Endothelial cell of umbilical vein (primary cell): ENCODE measurements at regions of chr17 and their contacts with region 1.

Region 1: DNA sequence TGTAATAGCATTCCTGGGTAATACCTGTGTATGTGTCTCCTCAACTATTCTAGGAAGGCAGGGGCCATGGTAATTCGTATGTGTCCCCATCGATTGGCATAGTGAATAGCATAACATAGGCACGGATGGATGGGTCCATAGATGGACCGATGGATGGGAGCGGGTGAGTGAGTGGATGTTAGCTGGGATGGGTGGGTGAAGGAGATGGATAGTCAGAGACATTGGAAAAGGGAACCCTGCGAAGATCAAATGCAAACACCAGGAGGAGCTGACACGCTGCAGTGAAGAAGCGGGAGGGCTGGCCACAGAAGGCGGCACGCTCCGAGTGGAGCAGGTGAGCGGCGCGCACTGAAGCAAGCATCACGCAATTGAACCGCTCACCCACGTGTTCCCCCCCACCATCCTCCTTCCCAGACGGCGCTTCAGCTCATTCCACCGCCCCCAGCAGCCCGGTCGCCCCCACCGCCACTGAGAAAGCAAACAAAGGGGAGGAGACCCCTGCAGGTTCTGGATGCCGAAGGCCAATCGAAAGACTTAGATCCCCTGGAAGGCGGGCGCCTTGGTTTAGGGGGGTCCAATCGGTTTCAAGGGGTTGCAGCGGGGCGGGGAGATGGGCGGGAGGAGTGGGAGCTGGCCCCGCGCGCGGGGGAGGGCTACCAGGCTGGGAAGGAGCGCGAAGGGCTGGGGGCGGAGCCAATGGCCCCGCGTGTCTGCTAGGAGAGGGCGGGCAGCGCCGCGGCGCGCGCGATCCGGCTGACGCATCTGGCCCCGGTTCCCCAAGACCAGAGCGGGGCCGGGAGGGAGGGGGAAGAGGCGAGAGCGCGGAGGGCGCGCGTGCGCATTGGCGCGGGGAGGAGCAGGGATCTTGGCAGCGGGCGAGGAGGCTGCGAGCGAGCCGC is at the start of gene ARRB2:
- DNase-seq: peak; percentile 99
- H3K4me3 ChIP-seq: peak within 1 kb of the TSS; percentile 58 to 84 (median 67)
- H3K27ac ChIP-seq: peak within 1 kb of the TSS; percentile 7
- H3K4me1 ChIP-seq: peaks cover 18% of the 10 kb centered on the region
- H3K27me3 ChIP-seq: no peaks in the 10 kb centered on the region
- CTCF ChIP-seq: peak; percentile 36 to 77
- POLR2A ChIP-seq: no peak
- total RNA-seq, gene ARRB2: 21.3 and 25.2 TPM in 2 replicates

Region 2: GRCh38 chr17:4691686-4692085 is 18.4 kb before region 1 on chr17:
- CTCF ChIA-PET with region 1: no interaction called
- POLR2A ChIA-PET with region 1: no interaction called
- dilution Hi-C with region 1: no loop called
- intact Hi-C with region 1: no loop called
- DNase-seq: no peak
- H3K4me3 ChIP-seq: no peak overlapping the region
- H3K27ac ChIP-seq: no peak overlapping the region
- H3K4me1 ChIP-seq: no peaks in the 10 kb centered on the region
- H3K27me3 ChIP-seq: no peaks in the 10 kb centered on the region
- CTCF ChIP-seq: no peak
- POLR2A ChIP-seq: no peak

Region 3: GRCh38 chr17:4733073-4733531 is 23.1 kb after region 1 on chr17:
- CTCF ChIA-PET with region 1: interaction called, 9 read pairs
- POLR2A ChIA-PET with region 1: interaction called, 9 read pairs
- dilution Hi-C with region 1: no loop called
- intact Hi-C with region 1: loop called (anchors 1 kb)
- DNase-seq: no peak
- H3K4me3 ChIP-seq: no peak overlapping the region
- H3K27ac ChIP-seq: no peak overlapping the region
- H3K4me1 ChIP-seq: peaks cover 8% of the 10 kb centered on the region
- H3K27me3 ChIP-seq: peaks cover under 1 to 1% of the 10 kb centered on the region in 2 experiments
- CTCF ChIP-seq: no peak
- POLR2A ChIP-seq: no peak

Region 4: DNA sequence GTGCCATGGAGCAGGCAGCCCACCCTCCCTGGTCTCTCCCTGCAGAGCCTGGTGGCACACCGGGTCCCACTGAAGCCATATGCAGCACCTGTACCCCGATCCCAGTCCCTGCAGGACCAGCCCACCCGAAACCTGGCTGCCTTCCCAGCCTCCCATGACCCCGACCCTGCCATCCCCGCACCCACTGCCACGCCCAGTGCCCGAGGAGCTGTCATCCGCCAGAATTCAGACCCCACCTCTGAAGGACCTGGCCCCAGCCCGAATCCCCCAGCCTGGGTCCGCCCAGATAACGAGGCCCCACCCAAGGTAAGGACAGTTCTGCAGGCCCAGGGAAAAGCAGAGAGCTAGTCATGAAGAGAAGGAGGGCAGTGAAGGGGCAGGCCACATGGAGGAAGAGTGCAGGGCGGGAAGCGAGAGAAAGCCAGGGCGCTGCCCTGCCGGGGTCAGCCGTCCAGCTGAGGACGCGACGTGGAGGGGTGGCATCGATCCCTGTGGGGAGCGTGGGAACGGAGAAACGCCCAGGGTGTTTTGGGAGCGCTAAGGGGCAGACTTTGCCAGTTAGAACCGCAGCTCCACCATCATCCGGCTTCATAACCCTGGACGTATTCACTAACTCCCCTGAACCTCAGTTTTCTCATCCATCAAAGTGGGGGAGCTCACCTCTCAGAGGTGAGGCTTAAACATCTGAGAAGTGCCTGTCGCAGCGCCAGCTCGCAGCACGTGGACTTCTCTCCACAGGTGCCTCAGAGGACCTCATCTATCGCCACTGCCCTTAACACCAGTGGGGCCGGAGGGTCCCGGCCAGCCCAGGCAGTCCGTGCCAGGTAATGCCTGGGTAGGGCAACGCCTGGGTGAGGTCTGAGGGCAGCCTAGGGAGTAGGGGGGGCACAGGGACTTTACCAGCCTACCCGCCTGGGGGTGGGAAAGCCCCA is 181.6 kb after region 1 on chr17:
- CTCF ChIA-PET with region 1: interaction called, 11 read pairs
- POLR2A ChIA-PET with region 1: no interaction called
- dilution Hi-C with region 1: no loop called
- intact Hi-C with region 1: loop called (anchors 1 kb)
- DNase-seq: no peak
- H3K4me3 ChIP-seq: no peak overlapping the region
- H3K27ac ChIP-seq: no peak overlapping the region
- H3K4me1 ChIP-seq: no peaks in the 10 kb centered on the region
- H3K27me3 ChIP-seq: no peaks in the 10 kb centered on the region
- CTCF ChIP-seq: no peak
- POLR2A ChIP-seq: no peak

Region 5: GRCh38 chr17:4903051-4903818 is 193.2 kb after region 1 on chr17 and contains the start of gene CHRNE:
- CTCF ChIA-PET with region 1: interaction called, 70 read pairs
- POLR2A ChIA-PET with region 1: interaction called, 6 read pairs
- dilution Hi-C with region 1: no loop called
- intact Hi-C with region 1: loop called (anchors 1 kb)
- DNase-seq: peak; percentile 76
- H3K4me3 ChIP-seq: no peak within 1 kb of the TSS
- H3K27ac ChIP-seq: no peak within 1 kb of the TSS
- H3K4me1 ChIP-seq: peaks cover 10% of the 10 kb centered on the region
- H3K27me3 ChIP-seq: no peaks in the 10 kb centered on the region
- CTCF ChIP-seq: peak; percentile 63 to 77
- POLR2A ChIP-seq: no peak
- total RNA-seq, gene CHRNE: 0.76 and 0.84 TPM in 2 replicates